ENCODE measurements at regions of chr6 and their contacts with region 1.

Region 1: DNA sequence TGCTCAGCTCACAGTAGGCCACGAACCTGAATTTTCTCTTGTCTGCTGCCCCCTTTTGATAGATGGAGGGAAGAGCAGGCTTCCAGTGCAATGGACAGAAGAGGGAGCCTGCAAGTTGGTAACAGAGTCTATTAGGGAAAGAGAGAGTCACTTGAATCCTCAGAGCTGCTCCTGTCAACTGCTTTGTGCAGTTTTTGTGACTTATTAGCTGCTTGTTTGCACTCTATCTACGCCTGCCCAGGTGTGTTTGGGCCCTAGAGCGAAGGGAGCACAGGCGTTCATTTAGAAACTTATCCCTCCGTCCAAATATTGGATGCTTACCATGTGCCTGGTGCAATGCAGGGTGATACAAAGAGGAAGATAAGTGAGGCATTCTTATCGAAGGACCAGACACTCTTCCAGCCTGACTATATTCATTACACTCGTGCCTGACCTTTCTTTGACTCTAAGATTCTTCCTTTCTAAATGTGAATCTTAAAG is 11.6 kb upstream of the SLC2A12 start:
- DNase-seq: peak; percentile 6 to 75 (median 50)
- ATAC-seq: peak; percentile 98
- H3K4me3 ChIP-seq: no peak overlapping the region
- H3K4me3 Mint-ChIP-seq: no peak overlapping the region
- H3K27ac ChIP-seq: no peak overlapping the region
- H3K27ac Mint-ChIP-seq: no peak overlapping the region
- H3K4me1 ChIP-seq: no peaks in the 10 kb centered on the region
- H3K4me1 Mint-ChIP-seq: peaks cover 2% of the 10 kb centered on the region
- H3K27me3 ChIP-seq: no peaks in the 10 kb centered on the region
- H3K27me3 Mint-ChIP-seq: no peaks in the 10 kb centered on the region
- CTCF ChIP-seq: peak; percentile 75

Region 2: GRCh38 chr6:133916650-133917151 is 147.3 kb before region 1 on chr6:
- CTCF ChIA-PET with region 1: interaction called, 238 read pairs
- POLR2A ChIA-PET with region 1: no interaction called
- intact Hi-C with region 1: no loop called
- DNase-seq: peak; percentile 21 to 79 (median 70)
- ATAC-seq: peak; percentile 52
- H3K4me3 ChIP-seq: no peak overlapping the region
- H3K4me3 Mint-ChIP-seq: no peak overlapping the region
- H3K27ac ChIP-seq: no peak overlapping the region
- H3K27ac Mint-ChIP-seq: no peak overlapping the region
- H3K4me1 ChIP-seq: peaks cover 5% of the 10 kb centered on the region
- H3K4me1 Mint-ChIP-seq: peaks cover 3% of the 10 kb centered on the region
- H3K27me3 ChIP-seq: no peaks in the 10 kb centered on the region
- H3K27me3 Mint-ChIP-seq: peaks cover 13% of the 10 kb centered on the region
- CTCF ChIP-seq: peak; percentile 71

Region 3: GRCh38 chr6:133973109-133973971 is 90.7 kb before region 1 on chr6:
- CTCF ChIA-PET with region 1: interaction called, 43 read pairs
- POLR2A ChIA-PET with region 1: no interaction called
- intact Hi-C with region 1: loop called (anchors 1 kb)
- DNase-seq: peak in 2 of 9 experiments; percentile 58 to 72
- ATAC-seq: peak; percentile 79
- H3K4me3 ChIP-seq: no peak overlapping the region
- H3K4me3 Mint-ChIP-seq: no peak overlapping the region
- H3K27ac ChIP-seq: no peak overlapping the region
- H3K27ac Mint-ChIP-seq: no peak overlapping the region
- H3K4me1 ChIP-seq: no peaks in the 10 kb centered on the region
- H3K4me1 Mint-ChIP-seq: peaks cover 61% of the 10 kb centered on the region
- H3K27me3 ChIP-seq: no peaks in the 10 kb centered on the region
- H3K27me3 Mint-ChIP-seq: no peaks in the 10 kb centered on the region
- CTCF ChIP-seq: peak; percentile 89

Region 4: GRCh38 chr6:134047673-134048072 is 16.3 kb before region 1 on chr6:
- CTCF ChIA-PET with region 1: interaction called, 25 read pairs
- POLR2A ChIA-PET with region 1: no interaction called
- intact Hi-C with region 1: no loop called
- DNase-seq: no peak
- ATAC-seq: no peak
- H3K4me3 ChIP-seq: no peak overlapping the region
- H3K4me3 Mint-ChIP-seq: no peak overlapping the region
- H3K27ac ChIP-seq: no peak overlapping the region
- H3K27ac Mint-ChIP-seq: no peak overlapping the region
- H3K4me1 ChIP-seq: no peaks in the 10 kb centered on the region
- H3K4me1 Mint-ChIP-seq: peaks cover 8% of the 10 kb centered on the region
- H3K27me3 ChIP-seq: no peaks in the 10 kb centered on the region
- H3K27me3 Mint-ChIP-seq: peaks cover 8% of the 10 kb centered on the region
- CTCF ChIP-seq: no peak

Region 5: GRCh38 chr6:134080171-134080795 is 16.3 kb after region 1 on chr6:
- CTCF ChIA-PET with region 1: interaction called, 17 read pairs
- POLR2A ChIA-PET with region 1: no interaction called
- intact Hi-C with region 1: no loop called
- DNase-seq: no peak
- ATAC-seq: no peak
- H3K4me3 ChIP-seq: no peak overlapping the region
- H3K4me3 Mint-ChIP-seq: no peak overlapping the region
- H3K27ac ChIP-seq: no peak overlapping the region
- H3K27ac Mint-ChIP-seq: no peak overlapping the region
- H3K4me1 ChIP-seq: no peaks in the 10 kb centered on the region
- H3K4me1 Mint-ChIP-seq: peaks cover 13% of the 10 kb centered on the region
- H3K27me3 ChIP-seq: no peaks in the 10 kb centered on the region
- H3K27me3 Mint-ChIP-seq: peaks cover 2% of the 10 kb centered on the region
- CTCF ChIP-seq: no peak